ENCODE measurements at regions of chr1 and their contacts with region 1.

Region 1: DNA sequence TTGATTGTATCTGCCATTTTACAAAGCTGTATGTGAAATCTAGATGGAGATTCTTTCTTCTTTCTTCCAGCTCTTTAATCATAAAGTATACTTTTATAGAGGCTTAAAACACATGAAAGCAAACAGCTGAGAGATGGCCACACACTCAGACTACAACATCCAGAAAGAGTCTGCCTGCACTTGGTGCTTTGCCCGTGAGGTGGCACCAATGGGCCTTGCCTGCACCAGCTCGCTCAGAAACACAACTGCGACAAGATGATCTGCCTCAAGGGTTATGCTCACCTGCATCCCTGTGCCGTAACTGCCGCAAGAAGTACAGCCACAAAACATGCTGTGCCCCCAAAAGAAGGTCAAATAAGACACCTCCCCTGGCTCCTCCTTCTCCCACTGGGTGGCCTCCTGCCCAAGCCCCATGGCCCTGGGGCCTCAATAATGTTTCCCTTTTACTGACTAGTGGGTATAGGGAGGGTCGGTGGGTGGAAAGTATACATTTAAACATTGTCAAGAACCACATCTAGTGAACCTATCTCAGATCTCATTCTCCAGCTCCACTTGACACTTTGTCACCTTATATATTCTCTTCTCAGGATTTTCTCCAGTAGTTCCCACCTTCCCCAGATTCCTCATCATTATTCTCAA is 66.7 kb upstream of the ANGPTL3 start:
- DNase-seq: no peak

Region 2: DNA sequence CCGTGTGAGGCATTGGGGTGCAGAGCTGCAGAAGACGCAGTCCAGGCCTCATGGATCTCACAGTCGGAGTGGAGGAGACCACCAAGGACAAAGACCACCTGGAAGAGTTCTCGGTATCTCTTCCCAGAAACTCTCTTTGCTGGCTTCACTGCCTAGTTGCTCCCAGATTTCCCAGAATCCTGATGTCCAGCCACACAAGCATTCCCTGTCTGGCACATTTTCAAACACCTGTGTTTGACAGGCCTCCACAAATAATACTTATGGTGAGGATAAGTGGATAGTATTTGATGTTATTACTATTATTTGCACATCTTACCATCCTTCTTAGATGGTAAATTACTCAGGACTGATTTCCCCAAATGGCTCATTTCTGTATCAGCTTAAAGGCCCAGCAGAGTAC is 183.7 kb before region 1 on chr1:
- intact Hi-C with region 1: no loop called
- DNase-seq: no peak

Region 3: DNA sequence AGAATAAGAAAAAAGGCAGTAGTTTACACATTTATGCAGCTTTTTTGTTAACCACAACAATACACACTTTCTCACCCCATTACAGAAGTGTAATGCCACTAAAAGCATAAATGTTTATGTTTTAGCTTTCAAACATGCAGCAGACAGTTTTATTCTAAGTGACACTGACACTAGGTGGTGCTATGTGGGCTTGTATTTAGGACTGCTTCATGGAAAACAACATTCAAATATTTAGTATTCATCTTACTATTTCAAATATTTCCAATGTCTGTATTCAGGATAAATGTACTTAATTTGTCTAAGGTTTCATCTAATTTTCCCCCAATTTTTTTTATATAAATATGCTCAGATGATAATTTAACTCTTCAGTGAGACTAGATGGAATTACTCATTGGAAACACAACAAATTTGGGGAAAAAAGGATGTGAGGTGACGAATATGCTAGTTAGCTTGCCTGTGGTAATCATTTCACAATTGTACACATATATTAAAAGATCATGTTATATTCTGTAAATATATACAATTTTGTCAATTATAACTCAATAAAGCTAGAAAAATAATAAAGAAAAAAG is 22.4 kb before region 1 on chr1:
- intact Hi-C with region 1: no loop called
- DNase-seq: no peak

Region 4: GRCh38 chr1:62746085-62746808 is 215.6 kb after region 1 on chr1:
- intact Hi-C with region 1: loop called in 1 of 2 experiments (anchors 10 kb)
- DNase-seq: no peak